ENCODE measurements at regions of chr6 and their contacts with region 1.

Region 1: GRCh38 chr6:134938896-134939295 is 11.0 kb downstream of the ALDH8A1 start:
- DNase-seq: no peak
- H3K4me3 ChIP-seq: no peak overlapping the region
- H3K4me3 Mint-ChIP-seq: no peak overlapping the region
- H3K27ac ChIP-seq: no peak overlapping the region
- H3K27ac Mint-ChIP-seq: no peak overlapping the region
- H3K4me1 ChIP-seq: no peaks in the 10 kb centered on the region
- H3K4me1 Mint-ChIP-seq: no peaks in the 10 kb centered on the region
- H3K27me3 ChIP-seq: no peaks in the 10 kb centered on the region
- H3K27me3 Mint-ChIP-seq: peaks cover 0 to 1% (median 0%) of the 10 kb centered on the region in 3 donors
- CTCF ChIP-seq: no peak

Region 2: DNA sequence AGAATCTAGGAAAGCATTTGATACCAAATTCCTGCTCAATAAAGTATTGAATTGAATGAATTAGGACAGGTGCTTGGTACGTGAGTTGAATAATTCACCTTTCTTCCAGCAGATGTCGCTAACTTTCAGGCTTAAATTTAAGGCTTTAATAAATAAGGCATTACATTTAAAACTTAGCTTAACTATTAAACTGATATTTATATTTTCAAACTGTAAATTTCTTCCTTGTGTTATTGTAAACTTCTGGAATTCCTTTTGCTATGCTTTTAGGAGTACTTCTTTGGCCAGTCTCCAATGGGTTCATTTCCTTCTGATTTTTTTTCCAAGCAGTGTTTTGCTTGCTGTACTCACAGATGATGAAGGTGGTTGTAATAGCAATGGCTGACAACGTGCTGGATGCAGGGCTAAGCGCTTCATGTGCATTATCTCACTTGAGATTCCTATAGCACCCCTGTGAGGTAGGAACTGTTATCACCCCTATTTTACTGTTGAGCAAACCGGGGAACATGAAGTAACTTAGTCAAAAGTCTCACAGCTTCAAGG is 815.2 kb before region 1 on chr6:
- intact Hi-C with region 1: loop called (anchors 10 kb)
- DNase-seq: peak; percentile 23 to 55 (median 39)
- H3K4me3 ChIP-seq: no peak overlapping the region
- H3K4me3 Mint-ChIP-seq: no peak overlapping the region
- H3K27ac ChIP-seq: no peak overlapping the region
- H3K27ac Mint-ChIP-seq: no peak overlapping the region
- H3K4me1 ChIP-seq: no peaks in the 10 kb centered on the region
- H3K4me1 Mint-ChIP-seq: no peaks in the 10 kb centered on the region
- H3K27me3 ChIP-seq: no peaks in the 10 kb centered on the region
- H3K27me3 Mint-ChIP-seq: peaks cover 0 to 2% (median 0%) of the 10 kb centered on the region in 3 donors
- CTCF ChIP-seq: peak; percentile 93

Measured in CD14-positive monocyte (primary cell).